PC-3 (cell line): ENCODE measurements at regions of chr6 and their contacts with region 1.

Region 1: DNA sequence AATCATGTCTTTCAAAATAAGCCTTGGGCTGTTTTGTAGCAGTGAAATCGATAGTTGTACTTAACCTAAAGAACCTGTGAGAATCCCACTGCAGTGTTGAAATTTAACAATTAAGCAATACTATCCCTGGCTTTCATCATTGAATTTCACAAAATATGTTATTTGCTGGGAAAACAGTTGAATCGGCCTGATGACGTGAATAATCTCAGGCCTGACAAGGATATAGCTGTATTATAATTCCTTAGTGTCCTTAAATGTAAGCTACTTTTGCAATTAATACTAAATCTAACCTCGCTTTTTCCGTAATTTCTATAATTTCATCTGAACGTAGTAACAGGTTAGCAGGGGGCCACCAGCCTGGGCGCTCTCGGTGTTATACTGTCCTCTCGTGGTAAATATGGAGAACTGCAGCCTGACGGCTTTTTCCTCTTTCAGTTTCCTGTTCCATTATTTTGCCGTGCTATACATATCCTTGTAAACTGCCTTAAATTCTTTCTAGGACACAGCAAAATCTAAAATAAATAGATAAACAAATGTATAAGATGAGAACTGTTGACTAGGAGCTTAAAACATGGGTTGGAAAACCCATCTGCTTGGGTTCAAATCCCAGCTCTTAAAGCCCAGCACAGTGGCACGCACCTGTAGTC is 24.0 kb downstream of the MTFR2 start:
- DNase-seq: peak; percentile 68
- ATAC-seq: peak; percentile 68
- H3K4me3 ChIP-seq: peak overlapping the region; percentile 44; the same call in 1 of the 2 replicates
- H3K27ac ChIP-seq: no peak overlapping the region
- H3K4me1 ChIP-seq: no peaks in the 10 kb centered on the region
- H3K27me3 ChIP-seq: no peaks in the 10 kb centered on the region
- CTCF ChIP-seq: peak; percentile 97

Region 2: DNA sequence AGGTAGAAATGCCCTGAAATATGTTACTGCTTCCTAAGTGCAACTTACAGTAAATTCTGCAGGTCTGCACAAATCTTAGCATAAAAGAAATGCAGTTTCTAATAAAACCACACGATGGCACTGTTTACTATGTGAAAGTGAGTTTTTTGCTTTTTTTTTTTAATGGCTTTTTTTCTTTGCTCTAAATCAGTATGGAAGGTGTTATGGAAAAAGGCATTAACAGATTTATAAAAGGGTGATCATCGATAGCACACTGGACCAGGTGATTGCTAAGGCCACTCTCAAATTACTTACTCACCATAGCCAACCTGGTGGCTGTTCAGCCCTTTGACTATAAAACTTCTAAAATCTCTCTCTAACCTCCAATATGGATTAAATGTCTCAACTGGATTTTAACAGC is 774.5 kb before region 1 on chr6:
- CTCF ChIA-PET with region 1: no interaction called
- POLR2A ChIA-PET with region 1: no interaction called
- intact Hi-C with region 1: loop called (anchors 2 kb)
- DNase-seq: peak; percentile 68
- ATAC-seq: no peak
- H3K4me3 ChIP-seq: no peak overlapping the region
- H3K27ac ChIP-seq: no peak overlapping the region
- H3K4me1 ChIP-seq: no peaks in the 10 kb centered on the region
- H3K27me3 ChIP-seq: no peaks in the 10 kb centered on the region
- CTCF ChIP-seq: peak; percentile 71

Region 3: DNA sequence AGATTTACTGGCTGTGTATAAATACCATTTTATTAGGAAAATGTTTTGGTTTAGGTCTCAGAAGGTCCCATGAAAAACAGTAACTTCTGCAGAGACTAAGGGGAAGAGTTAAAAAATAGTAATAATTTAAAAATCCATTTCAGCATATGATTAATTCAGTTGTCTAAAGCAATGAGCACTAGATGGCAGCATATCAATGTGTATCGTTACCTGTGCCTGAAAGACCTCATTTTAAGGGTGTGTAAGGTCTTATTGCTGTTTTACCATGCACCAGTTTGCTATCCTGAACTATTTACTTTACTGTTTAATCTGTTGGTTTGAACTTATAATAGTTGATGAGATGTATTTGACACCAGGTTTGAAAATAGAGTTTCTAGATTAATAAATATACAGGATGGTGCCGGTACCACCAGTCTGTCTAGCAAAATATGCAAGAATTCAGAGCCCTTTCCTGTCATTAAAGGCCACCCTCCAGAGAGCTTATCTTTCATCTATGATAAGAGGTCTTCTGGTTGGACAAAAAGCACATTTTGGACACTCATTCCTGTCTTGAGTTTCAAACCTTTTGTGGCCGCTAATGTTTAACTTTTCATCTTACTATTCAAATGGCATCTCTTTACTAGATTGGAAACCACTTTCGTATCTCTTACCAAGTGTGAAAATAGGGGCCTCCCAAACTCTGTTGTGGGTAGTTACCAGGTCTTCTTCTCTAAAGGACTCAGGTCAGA is 719.7 kb before region 1 on chr6:
- CTCF ChIA-PET with region 1: no interaction called
- POLR2A ChIA-PET with region 1: no interaction called
- intact Hi-C with region 1: loop called (anchors 1 kb)
- DNase-seq: peak; percentile 69
- ATAC-seq: peak; percentile 53; the same call in 1 of the 2 replicates
- H3K4me3 ChIP-seq: no peak overlapping the region
- H3K27ac ChIP-seq: no peak overlapping the region
- H3K4me1 ChIP-seq: no peaks in the 10 kb centered on the region
- H3K27me3 ChIP-seq: no peaks in the 10 kb centered on the region
- CTCF ChIP-seq: peak; percentile 72

Region 4: GRCh38 chr6:135759831-135760230 is 466.3 kb before region 1 on chr6:
- CTCF ChIA-PET with region 1: no interaction called
- POLR2A ChIA-PET with region 1: no interaction called
- intact Hi-C with region 1: loop called (anchors 2 kb)
- DNase-seq: peak; percentile 65
- ATAC-seq: no peak
- H3K4me3 ChIP-seq: no peak overlapping the region
- H3K27ac ChIP-seq: no peak overlapping the region
- H3K4me1 ChIP-seq: no peaks in the 10 kb centered on the region
- H3K27me3 ChIP-seq: no peaks in the 10 kb centered on the region
- CTCF ChIP-seq: peak; percentile 62

Region 5: DNA sequence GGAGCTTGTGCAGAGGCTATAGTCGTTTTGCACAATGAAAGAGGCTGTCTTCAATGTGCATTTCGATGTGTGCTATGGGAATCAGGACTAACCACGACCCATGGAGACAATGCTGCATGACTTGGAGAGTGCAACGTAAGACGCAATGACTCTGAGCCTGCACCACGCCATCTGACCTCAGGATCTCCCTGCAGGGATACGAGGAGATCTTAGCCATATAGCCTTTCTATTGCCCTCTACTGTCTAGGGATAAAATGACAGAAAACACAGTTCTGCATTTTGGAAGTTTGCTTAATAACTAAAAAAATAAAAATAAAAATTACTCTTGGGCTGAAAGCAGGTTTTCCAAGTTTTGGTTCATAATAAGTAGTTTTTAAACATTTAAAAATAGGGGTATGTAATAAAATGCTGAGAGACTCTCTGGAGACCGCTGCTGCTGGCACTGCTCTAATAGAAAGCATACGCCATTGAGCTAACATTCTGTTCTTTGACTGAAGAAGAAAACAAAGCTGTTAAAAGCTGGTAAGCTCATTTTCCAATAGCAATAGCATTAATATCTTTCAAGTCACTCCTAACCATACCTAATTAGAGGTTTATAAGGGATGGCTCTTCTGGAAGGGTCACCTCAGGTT is 287.5 kb before region 1 on chr6:
- CTCF ChIA-PET with region 1: no interaction called
- POLR2A ChIA-PET with region 1: no interaction called
- intact Hi-C with region 1: loop called (anchors 10 kb)
- DNase-seq: peak; percentile 30
- ATAC-seq: no peak
- H3K4me3 ChIP-seq: no peak overlapping the region
- H3K27ac ChIP-seq: no peak overlapping the region
- H3K4me1 ChIP-seq: peaks cover 41% of the 10 kb centered on the region
- H3K27me3 ChIP-seq: no peaks in the 10 kb centered on the region
- CTCF ChIP-seq: peak; percentile 44

Region 6: DNA sequence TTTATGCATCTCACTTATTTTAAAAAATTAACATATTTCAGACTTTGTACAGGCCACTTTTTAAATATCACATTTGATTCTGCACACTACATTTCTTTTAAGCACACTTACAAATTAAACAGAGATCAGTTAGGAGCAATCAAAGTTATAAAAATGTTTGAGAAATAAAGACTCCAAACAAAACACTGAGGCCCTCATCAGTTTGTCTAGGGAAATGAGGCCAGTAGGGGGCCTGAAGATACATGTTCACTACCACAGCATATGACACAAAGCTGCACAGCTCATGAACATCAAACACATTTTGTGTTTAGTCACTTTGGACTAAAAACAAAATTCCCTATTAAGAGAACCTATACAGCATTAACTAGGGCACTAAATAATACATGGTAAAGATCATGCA is 194.2 kb before region 1 on chr6:
- CTCF ChIA-PET with region 1: no interaction called
- POLR2A ChIA-PET with region 1: no interaction called
- intact Hi-C with region 1: loop called (anchors 1 kb)
- DNase-seq: peak; percentile 44
- ATAC-seq: peak; percentile 76
- H3K4me3 ChIP-seq: no peak overlapping the region
- H3K27ac ChIP-seq: no peak overlapping the region
- H3K4me1 ChIP-seq: no peaks in the 10 kb centered on the region
- H3K27me3 ChIP-seq: no peaks in the 10 kb centered on the region
- CTCF ChIP-seq: peak; percentile 67

Region 7: DNA sequence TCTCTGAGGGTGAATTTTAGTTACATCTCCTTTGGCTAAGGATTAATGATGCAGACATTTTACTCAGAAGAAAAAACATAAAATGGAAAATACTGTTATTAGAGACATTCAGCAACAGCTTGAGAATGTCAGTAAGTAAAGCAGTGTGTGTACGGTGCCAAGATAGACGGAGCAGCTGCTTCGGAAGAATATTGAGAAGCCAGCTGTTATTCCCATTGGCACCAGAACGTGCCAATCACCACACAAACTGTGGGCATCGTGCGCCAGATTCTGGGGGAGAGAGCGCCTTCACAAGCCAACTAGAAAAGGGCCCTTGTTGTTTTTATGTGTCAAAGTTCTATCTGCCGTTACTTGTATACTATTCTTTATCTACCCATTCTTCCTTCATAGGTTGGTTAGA is 139.5 kb before region 1 on chr6:
- CTCF ChIA-PET with region 1: no interaction called
- POLR2A ChIA-PET with region 1: no interaction called
- intact Hi-C with region 1: loop called (anchors 2 kb)
- DNase-seq: no peak
- ATAC-seq: no peak
- H3K4me3 ChIP-seq: no peak overlapping the region
- H3K27ac ChIP-seq: peak overlapping the region; percentile 67
- H3K4me1 ChIP-seq: peaks cover 51% of the 10 kb centered on the region
- H3K27me3 ChIP-seq: no peaks in the 10 kb centered on the region
- CTCF ChIP-seq: no peak